ENCODE measurements at regions of chr19 and their contacts with region 1.

Region 1: GRCh38 chr19:55503502-55504251 is 15.4 kb downstream of the SSC5D start:
- DNase-seq: peak; percentile 89 to 94 (median 91)
- H3K4me3 ChIP-seq: peak overlapping the region; percentile 17
- H3K27ac ChIP-seq: no peak overlapping the region
- H3K4me1 ChIP-seq: no peaks in the 10 kb centered on the region
- H3K27me3 ChIP-seq: no peaks in the 10 kb centered on the region
- CTCF ChIP-seq: peak; percentile 88 to 96 (median 94)
- EP300 ChIP-seq: no peak
- POLR2A ChIP-seq: peak; percentile 15

Region 2: GRCh38 chr19:54916822-54917221 is 586.9 kb before region 1 on chr19:
- intact Hi-C with region 1: no loop called
- DNase-seq: no peak
- H3K4me3 ChIP-seq: no peak overlapping the region
- H3K27ac ChIP-seq: no peak overlapping the region
- H3K4me1 ChIP-seq: no peaks in the 10 kb centered on the region
- H3K27me3 ChIP-seq: no peaks in the 10 kb centered on the region
- CTCF ChIP-seq: no peak
- EP300 ChIP-seq: no peak
- POLR2A ChIP-seq: no peak

Region 3: GRCh38 chr19:55279770-55280643 is 223.7 kb before region 1 on chr19 and contains the start of gene HSPBP1:
- intact Hi-C with region 1: loop called in 1 of 4 experiments (anchors 10 kb)
- DNase-seq: peak; percentile 92 to 97 (median 95)
- H3K4me3 ChIP-seq: peak within 1 kb of the TSS; percentile 77
- H3K27ac ChIP-seq: peak within 1 kb of the TSS; percentile 53 to 73
- H3K4me1 ChIP-seq: peaks cover 5% of the 10 kb centered on the region
- H3K27me3 ChIP-seq: no peaks in the 10 kb centered on the region
- CTCF ChIP-seq: peak in 1 of 3 donors; percentile 13
- EP300 ChIP-seq: no peak
- POLR2A ChIP-seq: peak; percentile 40
- total RNA-seq, gene HSPBP1: 20.5 to 40.7 (median 31.8) TPM

Region 4: GRCh38 chr19:55385740-55386529 is 117.7 kb before region 1 on chr19 and contains the start of gene RPL28:
- intact Hi-C with region 1: loop called in 1 of 4 experiments (anchors 10 kb)
- DNase-seq: peak; percentile 98 to 99 (median 99)
- H3K4me3 ChIP-seq: peak within 1 kb of the TSS; percentile 56
- H3K27ac ChIP-seq: peak within 1 kb of the TSS; percentile 73 to 95
- H3K4me1 ChIP-seq: peaks cover 26% of the 10 kb centered on the region
- H3K27me3 ChIP-seq: no peaks in the 10 kb centered on the region
- CTCF ChIP-seq: peak in 2 of 3 donors; percentile 16 to 21
- EP300 ChIP-seq: no peak
- POLR2A ChIP-seq: peak; percentile 94
- total RNA-seq, gene RPL28: 604 to 2,543 (median 2,257) TPM

Region 5: GRCh38 chr19:55461259-55461973 is 42.3 kb before region 1 on chr19 and contains the start of gene ISOC2:
- intact Hi-C with region 1: loop called in 3 of 4 experiments (anchors 5 kb)
- DNase-seq: peak; percentile 100
- H3K4me3 ChIP-seq: peak within 1 kb of the TSS; percentile 60
- H3K27ac ChIP-seq: peak within 1 kb of the TSS; percentile 64 to 72
- H3K4me1 ChIP-seq: no peaks in the 10 kb centered on the region
- H3K27me3 ChIP-seq: no peaks in the 10 kb centered on the region
- CTCF ChIP-seq: no peak
- EP300 ChIP-seq: peak; percentile 12
- POLR2A ChIP-seq: peak; percentile 82
- total RNA-seq, gene ISOC2: 21.8 to 39.2 (median 31.7) TPM

Region 6: DNA sequence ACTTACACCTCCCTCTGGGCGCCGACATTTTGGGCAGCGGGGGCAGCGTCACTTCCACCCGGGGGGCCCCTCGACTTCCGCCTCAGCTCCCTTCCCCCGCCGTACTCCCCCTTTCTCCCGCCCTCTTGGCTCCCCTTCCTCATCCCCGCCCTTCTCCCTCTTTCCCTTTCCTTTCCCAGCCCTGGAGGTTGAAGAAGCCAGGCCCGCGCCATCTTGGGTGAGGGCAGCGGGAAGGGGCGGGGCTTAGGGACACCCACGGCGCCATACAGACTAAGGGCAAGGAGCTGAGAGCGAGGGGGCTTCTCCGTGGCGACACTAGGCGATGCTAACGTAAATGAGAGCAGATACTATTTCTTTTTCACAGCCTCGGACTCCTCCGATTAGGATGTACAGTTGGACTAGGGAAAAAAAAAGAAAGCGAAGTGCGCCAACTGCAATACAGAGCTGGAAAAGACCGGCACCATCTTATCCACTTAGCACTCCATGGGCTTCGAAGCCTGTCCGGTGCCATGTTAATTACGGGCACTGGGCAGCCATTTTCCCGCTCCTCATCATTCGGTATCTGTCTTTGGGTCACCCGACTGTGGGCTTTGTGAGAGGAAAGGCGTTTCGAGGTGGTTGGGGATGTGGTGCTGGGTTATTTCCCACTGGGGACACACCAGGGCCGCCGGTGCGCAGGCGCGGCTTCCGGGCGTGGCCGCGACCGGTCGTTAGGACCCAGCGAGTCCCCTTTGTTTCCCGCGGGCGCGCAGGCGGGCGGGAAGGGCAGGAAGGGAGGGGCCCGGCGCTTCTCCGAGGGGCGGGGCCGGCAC is 96.0 kb after region 1 on chr19 and contains the start of gene FIZ1:
- intact Hi-C with region 1: no loop called
- DNase-seq: peak; percentile 98 to 99 (median 99)
- H3K4me3 ChIP-seq: peak within 1 kb of the TSS; percentile 96
- H3K27ac ChIP-seq: peak within 1 kb of the TSS; percentile 90 to 99
- H3K4me1 ChIP-seq: peaks cover 2% of the 10 kb centered on the region
- H3K27me3 ChIP-seq: no peaks in the 10 kb centered on the region
- CTCF ChIP-seq: peak in 1 of 3 donors; percentile 28
- EP300 ChIP-seq: peak; percentile 54
- POLR2A ChIP-seq: peak; percentile 17
- total RNA-seq, gene FIZ1: 3.6 to 22.7 (median 16.6) TPM

Region 7: DNA sequence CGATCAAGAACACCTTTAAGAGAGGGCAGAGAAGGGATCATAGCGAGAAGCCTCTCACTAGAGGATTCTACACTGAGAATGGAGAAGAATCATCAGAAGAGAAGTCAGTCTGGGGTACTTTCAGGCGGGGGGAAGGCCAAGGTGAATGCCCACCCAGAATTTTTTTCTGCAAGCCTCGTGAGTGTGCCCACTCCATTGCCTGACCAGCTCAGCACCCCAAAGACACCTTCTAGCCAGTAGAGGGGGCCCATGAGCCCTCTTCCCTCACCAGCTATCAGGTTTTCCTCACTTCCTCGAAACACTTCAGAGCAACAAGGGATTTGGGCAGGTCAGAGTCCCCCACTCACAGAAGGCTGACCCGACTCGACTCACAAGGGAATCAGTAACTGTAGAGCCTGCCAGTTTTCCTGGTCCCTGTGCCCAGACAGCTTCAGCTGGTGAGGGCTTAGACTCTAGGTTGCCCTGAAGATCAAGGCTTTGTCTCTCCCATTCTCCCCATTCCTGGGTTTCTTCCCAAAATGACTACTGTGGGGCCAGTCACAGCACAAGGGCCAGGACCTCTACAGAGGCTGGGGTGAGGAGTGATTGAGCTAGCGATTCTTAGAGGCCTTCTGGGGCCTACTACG is 410.1 kb after region 1 on chr19:
- intact Hi-C with region 1: no loop called
- DNase-seq: no peak
- H3K4me3 ChIP-seq: no peak overlapping the region
- H3K27ac ChIP-seq: no peak overlapping the region
- H3K4me1 ChIP-seq: no peaks in the 10 kb centered on the region
- H3K27me3 ChIP-seq: no peaks in the 10 kb centered on the region
- CTCF ChIP-seq: no peak
- EP300 ChIP-seq: no peak
- POLR2A ChIP-seq: no peak